ENCODE measurements at regions of chr7 and their contacts with region 1.

Region 1: GRCh38 chr7:131107337-131108211 is 220.1 kb upstream of the MKLN1 start:
- DNase-seq: peak; percentile 74 to 86 (median 78)
- ATAC-seq: peak; percentile 57
- H3K4me3 ChIP-seq: peak overlapping the region; percentile 61
- H3K27ac ChIP-seq: peak overlapping the region; percentile 84
- H3K4me1 ChIP-seq: peaks cover 41 to 49% of the 10 kb centered on the region in 2 experiments
- H3K27me3 ChIP-seq: no peaks in the 10 kb centered on the region
- CTCF ChIP-seq: peak in 2 of 3 experiments; percentile 17 to 26; a peak in 2 of 6 replicates
- EP300 ChIP-seq: no peak
- POLR2A ChIP-seq: peak; percentile 63
- RAD21 ChIP-seq: no peak; a peak in 1 of 4 replicates

Region 2: DNA sequence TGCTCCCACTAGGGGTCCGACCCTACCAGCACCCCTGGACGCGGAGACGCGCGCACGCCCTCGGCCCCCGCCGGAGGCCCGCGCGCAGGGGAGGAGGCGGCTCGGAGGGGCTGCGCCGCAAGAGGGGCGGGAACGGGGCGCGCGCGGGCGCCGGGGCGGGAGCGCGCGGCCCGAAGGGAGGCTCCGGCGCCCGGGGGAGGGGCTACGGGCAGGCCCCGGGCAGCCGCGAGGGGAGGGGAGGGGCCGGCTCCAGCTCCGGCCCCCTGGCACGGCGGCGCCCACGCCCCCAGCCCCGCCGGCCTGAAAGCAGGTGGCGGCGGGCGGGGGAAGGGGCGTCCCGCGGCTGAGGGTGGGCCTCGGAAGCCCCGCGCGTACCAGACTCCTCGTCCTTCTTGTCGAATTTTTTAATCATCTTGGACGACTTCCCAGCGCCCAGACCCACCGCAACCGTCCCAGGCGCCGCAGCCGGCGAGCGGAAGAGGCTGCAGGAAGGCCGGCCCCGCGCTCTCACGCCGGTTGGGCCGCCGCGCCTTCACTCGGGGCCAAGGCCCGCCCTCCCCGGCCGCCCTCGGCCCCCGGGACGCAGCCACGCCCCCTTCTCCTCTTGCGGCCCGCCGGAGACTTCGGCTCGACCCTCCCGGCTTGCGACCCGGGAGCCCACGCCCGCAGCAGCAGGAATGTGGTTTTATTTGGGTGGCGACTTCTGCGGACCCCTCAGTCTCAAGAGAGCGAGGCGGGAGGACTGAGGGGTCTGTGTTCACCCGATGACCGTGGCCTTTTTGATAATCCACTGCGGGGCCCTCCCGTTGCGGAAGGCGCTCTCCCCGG is 439.1 kb before region 1 on chr7 and contains the start of gene COPG2:
- CTCF ChIA-PET with region 1: no interaction called
- POLR2A ChIA-PET with region 1: no interaction called
- in situ Hi-C with region 1: no loop called
- intact Hi-C with region 1: no loop called
- DNase-seq: peak; percentile 96 to 100 (median 100)
- ATAC-seq: peak; percentile 100
- H3K4me3 ChIP-seq: peak within 1 kb of the TSS; percentile 75
- H3K27ac ChIP-seq: peak within 1 kb of the TSS; percentile 77
- H3K4me1 ChIP-seq: peaks cover 9 to 10% of the 10 kb centered on the region in 2 experiments; a peak in 4 of 5 replicates
- H3K27me3 ChIP-seq: peaks cover 0 to under 1% of the 10 kb centered on the region in 2 experiments; a peak in 2 of 5 replicates
- CTCF ChIP-seq: peak in 2 of 3 experiments; percentile 14 to 15; a peak in 2 of 6 replicates
- EP300 ChIP-seq: no peak
- POLR2A ChIP-seq: peak; percentile 85
- RAD21 ChIP-seq: no peak
- polyA plus RNA-seq, gene COPG2: 6.6 to 9.0 TPM

Region 3: GRCh38 chr7:131071786-131072504 is 35.6 kb before region 1 on chr7:
- CTCF ChIA-PET with region 1: no interaction called
- POLR2A ChIA-PET with region 1: interaction called, 5 read pairs
- in situ Hi-C with region 1: no loop called
- intact Hi-C with region 1: loop called (anchors 1 kb)
- DNase-seq: peak; percentile 61 to 99 (median 67)
- ATAC-seq: peak; percentile 90
- H3K4me3 ChIP-seq: peak overlapping the region; percentile 15; the same call in 1 of the 2 replicates
- H3K27ac ChIP-seq: peak overlapping the region; percentile 80
- H3K4me1 ChIP-seq: peaks cover 10 to 34% of the 10 kb centered on the region in 2 experiments
- H3K27me3 ChIP-seq: no peaks in the 10 kb centered on the region
- CTCF ChIP-seq: peak; percentile 10 to 71 (median 55); a peak in 5 of 6 replicates
- EP300 ChIP-seq: peak; percentile 64
- POLR2A ChIP-seq: peak; percentile 63; the same call in 1 of the 2 replicates
- RAD21 ChIP-seq: peak; percentile 53 to 56; a peak in 3 of 4 replicates

Region 4: DNA sequence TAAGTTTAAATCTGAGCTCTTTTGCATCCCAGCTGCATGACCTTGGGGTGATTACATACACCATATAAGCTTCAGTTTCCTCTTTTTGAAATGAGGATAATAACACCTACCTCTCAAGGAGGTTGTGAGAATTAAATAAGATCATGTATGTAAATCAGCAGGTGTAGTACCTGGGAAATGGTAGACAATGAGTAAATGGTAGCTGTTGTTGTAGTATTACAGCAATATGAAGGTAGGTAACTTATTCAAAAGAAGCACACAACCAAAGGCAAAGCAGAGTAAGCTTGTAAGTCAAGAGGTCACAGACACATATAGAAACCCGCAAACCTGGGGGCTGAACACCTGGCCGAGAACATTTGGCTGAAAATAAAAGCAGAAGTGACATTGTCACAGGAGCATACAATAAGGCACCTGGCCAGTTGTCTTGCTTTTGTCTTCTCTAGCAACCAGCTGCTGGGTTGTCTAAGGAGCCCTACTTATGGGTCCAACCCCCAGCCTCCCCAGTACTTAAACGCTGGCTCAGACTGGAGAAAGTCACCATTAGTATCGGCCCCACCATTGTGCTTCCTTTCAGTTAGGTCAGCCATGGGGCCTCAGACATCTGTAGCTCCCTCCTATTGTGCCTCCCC is 16.5 kb after region 1 on chr7:
- CTCF ChIA-PET with region 1: no interaction called
- POLR2A ChIA-PET with region 1: interaction called, 10 read pairs
- in situ Hi-C with region 1: no loop called
- intact Hi-C with region 1: no loop called
- DNase-seq: no peak
- ATAC-seq: peak; percentile 47
- H3K4me3 ChIP-seq: no peak overlapping the region
- H3K27ac ChIP-seq: no peak overlapping the region
- H3K4me1 ChIP-seq: peaks cover 0 to 3% of the 10 kb centered on the region in 2 experiments; a peak in 3 of 5 replicates
- H3K27me3 ChIP-seq: peaks cover 7 to 9% of the 10 kb centered on the region in 2 experiments; a peak in 2 of 5 replicates
- CTCF ChIP-seq: no peak
- EP300 ChIP-seq: no peak
- POLR2A ChIP-seq: no peak
- RAD21 ChIP-seq: no peak

Region 5: DNA sequence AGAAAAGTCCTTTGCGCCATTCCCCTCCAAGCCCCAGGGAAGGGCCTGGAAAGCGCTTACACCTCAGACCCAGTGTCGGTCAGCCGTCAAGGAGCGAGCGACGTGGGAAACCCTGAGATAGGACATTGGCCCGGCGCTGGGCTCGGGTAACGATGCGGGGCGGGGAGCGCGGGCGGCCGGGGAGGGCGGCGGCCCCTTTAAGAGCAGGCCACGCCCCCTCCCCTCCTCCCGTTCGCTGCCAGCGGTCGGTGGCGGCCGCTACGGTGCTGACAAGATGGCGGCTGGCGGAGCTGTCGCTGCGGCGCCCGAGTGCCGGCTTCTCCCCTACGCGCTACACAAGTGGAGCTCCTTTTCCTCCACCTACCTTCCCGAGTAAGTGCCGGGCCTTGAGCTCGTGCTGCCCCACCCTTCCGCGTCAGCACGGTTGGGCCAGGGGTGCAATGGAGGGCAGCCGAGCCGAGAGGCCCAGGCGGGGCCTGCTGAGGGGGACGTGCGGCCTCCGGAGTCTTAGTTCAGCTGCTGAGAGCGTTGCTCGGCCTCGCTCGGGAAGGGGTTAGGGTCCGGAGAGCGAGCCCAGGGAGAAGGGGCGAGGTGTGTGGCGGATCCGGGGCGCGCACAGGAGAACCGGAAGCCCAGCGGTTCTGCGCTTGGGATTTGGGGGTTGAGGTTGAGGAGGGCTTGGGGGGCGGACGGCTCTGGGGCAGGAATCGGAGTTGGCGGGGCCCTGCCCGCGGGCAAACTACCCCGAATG is 220.2 kb after region 1 on chr7 and contains the start of gene MKLN1:
- CTCF ChIA-PET with region 1: interaction called, 3 read pairs
- POLR2A ChIA-PET with region 1: interaction called, 3 read pairs
- in situ Hi-C with region 1: no loop called
- intact Hi-C with region 1: loop called (anchors 2 kb)
- DNase-seq: peak; percentile 98
- ATAC-seq: peak; percentile 96
- H3K4me3 ChIP-seq: peak within 1 kb of the TSS; percentile 87
- H3K27ac ChIP-seq: peak within 1 kb of the TSS; percentile 94
- H3K4me1 ChIP-seq: peaks cover 5 to 33% of the 10 kb centered on the region in 2 experiments; a peak in 3 of 5 replicates
- H3K27me3 ChIP-seq: no peaks in the 10 kb centered on the region
- CTCF ChIP-seq: 0 out of 6 replicates have a peak, but pooled peaks of 1 of the 3 experiments have one; percentile 3
- EP300 ChIP-seq: peak; percentile 28; the same call in 1 of the 2 replicates
- POLR2A ChIP-seq: peak; percentile 99
- RAD21 ChIP-seq: peak in 1 of 2 experiments; percentile 9; a peak in 1 of 4 replicates
- polyA plus RNA-seq, gene MKLN1: 27.0 to 68.8 TPM